B cell (primary cell): ENCODE measurements at regions of chr2 and their contacts with region 1.

Region 1: DNA sequence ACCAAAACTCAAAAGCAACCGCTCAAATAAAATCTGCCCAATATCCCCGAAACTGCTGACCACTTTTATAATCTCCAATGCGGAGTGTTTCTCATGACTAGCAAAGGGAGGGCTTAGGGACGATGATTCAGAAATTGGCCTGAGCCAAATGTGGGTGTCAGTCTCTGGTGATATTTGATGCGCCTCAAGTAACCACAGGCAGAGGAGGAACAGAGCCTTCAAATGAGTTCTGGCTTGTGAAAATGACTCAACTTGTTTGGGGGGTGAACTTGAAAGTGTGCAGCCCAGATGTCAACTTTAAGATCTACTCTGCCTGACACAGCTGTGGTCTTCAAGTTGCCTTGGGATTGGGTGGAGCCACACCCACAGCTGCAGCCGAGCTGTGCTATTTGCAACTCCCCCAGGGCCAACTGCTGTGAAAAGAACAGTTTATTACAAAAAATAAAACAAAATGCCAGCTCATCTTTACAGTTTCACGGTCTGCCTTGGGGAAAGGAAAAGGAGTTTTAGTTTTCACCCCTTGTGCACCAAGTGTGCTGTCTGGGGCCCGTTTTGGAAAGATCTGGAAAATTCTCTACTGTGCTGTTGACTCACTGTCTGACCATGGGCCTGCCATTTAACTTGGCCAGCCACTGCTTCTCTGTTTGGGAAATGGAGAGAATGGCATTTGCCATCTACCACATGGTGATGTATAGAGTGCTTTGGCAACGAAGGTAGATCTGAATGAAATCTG is 222.1 kb downstream of the MTX2 start:
- DNase-seq: peak; percentile 59
- ATAC-seq: peak; percentile 82
- H3K4me3 ChIP-seq: no peak overlapping the region
- H3K4me3 Mint-ChIP-seq: peak overlapping the region; percentile 14
- H3K27ac ChIP-seq: no peak overlapping the region
- H3K27ac Mint-ChIP-seq: peak overlapping the region; percentile 64
- H3K4me1 ChIP-seq: peaks cover 21 to 49% of the 10 kb centered on the region in 2 donors
- H3K4me1 Mint-ChIP-seq: peaks cover 43% of the 10 kb centered on the region
- H3K27me3 ChIP-seq: no peaks in the 10 kb centered on the region
- H3K27me3 Mint-ChIP-seq: peaks cover 6% of the 10 kb centered on the region
- CTCF ChIP-seq: no peak

Region 2: GRCh38 chr2:176269319-176270099 is 221.8 kb before region 1 on chr2 and contains the start of gene MTX2:
- CTCF ChIA-PET with region 1: no interaction called
- POLR2A ChIA-PET with region 1: no interaction called
- intact Hi-C with region 1: loop called (anchors 10 kb)
- DNase-seq: peak; percentile 85
- ATAC-seq: peak; percentile 90
- H3K4me3 ChIP-seq: peak within 1 kb of the TSS; percentile 57 to 91 (median 86)
- H3K4me3 Mint-ChIP-seq: peak within 1 kb of the TSS; percentile 99
- H3K27ac ChIP-seq: peak within 1 kb of the TSS; percentile 59 to 82
- H3K27ac Mint-ChIP-seq: peak within 1 kb of the TSS; percentile 93
- H3K4me1 ChIP-seq: peaks cover 9 to 10% of the 10 kb centered on the region in 2 donors
- H3K4me1 Mint-ChIP-seq: peaks cover 27% of the 10 kb centered on the region
- H3K27me3 ChIP-seq: no peaks in the 10 kb centered on the region
- H3K27me3 Mint-ChIP-seq: no peaks in the 10 kb centered on the region
- CTCF ChIP-seq: peak; percentile 14
- total RNA-seq, gene MTX2: 9.5 and 11.5 TPM in 2 replicates

Region 3: GRCh38 chr2:177118636-177119035 is 627.3 kb after region 1 on chr2:
- CTCF ChIA-PET with region 1: no interaction called
- POLR2A ChIA-PET with region 1: no interaction called
- intact Hi-C with region 1: no loop called
- DNase-seq: no peak
- ATAC-seq: no peak
- H3K4me3 ChIP-seq: no peak overlapping the region
- H3K4me3 Mint-ChIP-seq: no peak overlapping the region
- H3K27ac ChIP-seq: no peak overlapping the region
- H3K27ac Mint-ChIP-seq: no peak overlapping the region
- H3K4me1 ChIP-seq: no peaks in the 10 kb centered on the region
- H3K4me1 Mint-ChIP-seq: no peaks in the 10 kb centered on the region
- H3K27me3 ChIP-seq: no peaks in the 10 kb centered on the region
- H3K27me3 Mint-ChIP-seq: peaks cover 11% of the 10 kb centered on the region
- CTCF ChIP-seq: no peak